Dorsolateral prefrontal cortex (tissue), 120 donors: ENCODE measurements at regions of chr16 and their contacts with region 1.

Region 1: GRCh38 chr16:57084257-57084770 is 8.1 kb upstream of the CPNE2 start:
- DNase-seq: peak in 9 of 10 donors; percentile 48 to 83 (median 73)
- H3K4me3 ChIP-seq: peak overlapping the region in 1 of 59 donors; percentile 12
- H3K27ac ChIP-seq: peak overlapping the region in 33 of 59 donors; percentile 1 to 76 (median 45)
- H3K27me3 ChIP-seq: no peaks in the 10 kb centered on the region
- CTCF ChIP-seq: peak; percentile 91 to 100 (median 99)

Region 2: GRCh38 chr16:57000271-57001025 is 83.9 kb before region 1 on chr16:
- intact Hi-C with region 1: no loop called
- DNase-seq: no peak
- H3K4me3 ChIP-seq: no peak overlapping the region
- H3K27ac ChIP-seq: peak overlapping the region in 6 of 59 donors; percentile 9 to 51 (median 38)
- H3K27me3 ChIP-seq: no peaks in the 10 kb centered on the region
- CTCF ChIP-seq: no peak

Region 3: DNA sequence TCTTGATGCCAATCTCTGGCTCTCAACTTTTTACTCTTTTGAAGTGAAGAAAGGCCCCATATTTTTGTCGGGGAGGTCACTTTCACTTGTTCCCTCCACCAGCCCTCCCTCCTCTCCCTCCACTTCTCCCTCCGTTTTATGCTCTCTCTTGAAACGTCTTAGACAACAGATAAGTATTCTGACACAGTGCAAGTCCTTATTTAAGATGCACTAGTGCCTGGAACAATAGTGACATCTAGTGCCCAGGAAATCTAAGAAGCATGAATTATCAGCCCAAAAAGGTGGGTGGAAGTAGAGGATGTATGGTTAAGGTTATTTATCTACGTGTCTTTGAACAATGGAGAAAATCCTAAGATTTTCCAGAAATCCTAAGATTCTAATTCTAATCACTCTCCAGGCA is 83.6 kb after region 1 on chr16:
- intact Hi-C with region 1: loop called (anchors 1 kb)
- DNase-seq: no peak
- H3K4me3 ChIP-seq: peak overlapping the region in 9 of 59 donors; percentile 1 to 33 (median 17)
- H3K27ac ChIP-seq: peak overlapping the region in 54 of 59 donors; percentile 24 to 89 (median 78)
- H3K27me3 ChIP-seq: no peaks in the 10 kb centered on the region
- CTCF ChIP-seq: peak; percentile 30 to 91 (median 76)

Region 4: DNA sequence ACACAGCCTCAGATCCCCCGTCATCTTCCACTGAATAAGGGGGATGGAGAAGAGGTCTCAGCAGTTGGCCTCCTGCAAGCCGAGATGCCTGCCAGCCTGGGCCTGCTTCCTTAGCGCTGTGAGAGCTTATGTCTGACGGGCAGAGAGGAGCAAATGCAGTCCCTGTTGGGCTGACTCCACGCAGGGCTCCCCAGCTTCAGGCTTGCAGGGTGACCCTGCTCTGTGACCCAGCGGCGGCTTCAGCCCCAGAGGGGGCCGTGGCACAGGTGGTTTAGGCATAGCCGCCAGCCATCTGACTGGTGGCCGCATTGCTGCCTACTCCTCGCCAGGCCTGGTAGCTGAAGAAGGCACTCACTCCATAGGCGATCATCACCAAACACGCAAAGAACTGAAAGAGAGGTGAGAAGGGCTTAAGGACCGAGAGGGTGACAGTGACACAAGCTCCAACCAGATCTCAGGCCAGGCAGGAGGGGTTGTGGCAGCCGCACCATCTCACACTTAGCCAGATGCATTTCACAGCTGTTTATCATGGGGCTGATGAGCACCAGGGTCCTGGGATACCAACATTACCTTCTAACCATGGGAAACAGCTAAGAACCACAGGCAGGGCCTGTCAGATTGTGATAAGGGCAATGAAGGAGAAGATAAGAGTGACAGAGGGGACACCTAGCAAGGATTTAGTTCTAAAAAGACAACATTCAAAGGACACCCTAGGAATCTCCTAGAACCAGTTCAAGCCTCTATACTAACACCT is 172.5 kb after region 1 on chr16:
- intact Hi-C with region 1: loop called in 1 of 2 experiments (anchors 10 kb)
- DNase-seq: peak in 1 of 10 donors; percentile 24
- H3K4me3 ChIP-seq: no peak overlapping the region
- H3K27ac ChIP-seq: peak overlapping the region in 53 of 59 donors; percentile 50 to 99 (median 95)
- H3K27me3 ChIP-seq: no peaks in the 10 kb centered on the region
- CTCF ChIP-seq: no peak

Region 5: DNA sequence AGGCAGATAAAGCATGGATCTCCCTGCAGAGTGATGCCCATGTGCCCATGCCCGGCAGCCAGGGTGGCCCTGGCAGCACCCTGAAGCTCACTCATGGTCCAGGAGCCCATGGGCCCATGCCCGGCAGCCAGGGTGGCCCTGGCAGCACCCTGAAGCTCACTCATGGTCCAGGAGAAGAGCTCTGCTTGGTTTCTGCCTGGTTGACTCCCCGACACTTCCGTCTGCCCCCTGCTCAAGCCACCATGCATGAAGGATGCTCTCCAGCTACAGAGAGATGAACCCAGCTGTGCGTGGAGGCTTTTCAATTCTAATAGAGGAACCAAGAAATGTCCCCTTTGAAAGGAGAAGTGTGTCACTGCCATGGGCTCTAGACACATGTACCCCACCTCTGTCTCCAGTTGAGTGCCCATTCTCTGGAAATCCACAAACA is 329.0 kb after region 1 on chr16:
- intact Hi-C with region 1: loop called (anchors 5 to 10 kb)
- DNase-seq: no peak
- H3K4me3 ChIP-seq: no peak overlapping the region
- H3K27ac ChIP-seq: no peak overlapping the region
- H3K27me3 ChIP-seq: no peaks in the 10 kb centered on the region
- CTCF ChIP-seq: no peak

Region 6: DNA sequence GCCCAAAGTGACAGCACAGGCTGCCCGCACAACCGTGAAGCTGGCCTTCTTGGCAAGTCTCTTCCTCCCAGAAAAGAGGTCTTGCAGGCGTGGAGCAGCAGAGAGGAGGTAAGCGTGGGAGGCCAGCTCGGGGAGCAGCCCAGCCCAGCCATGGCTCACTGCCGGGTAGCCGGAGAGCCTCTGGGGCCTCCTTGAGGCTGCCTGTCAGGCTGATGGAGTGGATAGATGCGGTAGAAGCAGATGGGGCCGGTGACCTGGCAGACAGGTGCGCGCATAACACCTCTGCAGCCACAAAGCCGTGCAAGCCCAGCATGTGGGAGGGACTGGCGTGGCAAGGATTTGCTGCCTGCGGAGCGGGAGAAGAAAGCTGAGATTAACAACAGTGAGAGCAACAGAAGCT is 419.1 kb after region 1 on chr16:
- intact Hi-C with region 1: no loop called
- DNase-seq: peak in 1 of 10 donors; percentile 36
- H3K4me3 ChIP-seq: no peak overlapping the region
- H3K27ac ChIP-seq: peak overlapping the region in 2 of 59 donors; percentile 14 to 27
- H3K27me3 ChIP-seq: no peaks in the 10 kb centered on the region
- CTCF ChIP-seq: no peak